CD8-positive, alpha-beta T cell (primary cell): ENCODE measurements at regions of chr5 and their contacts with region 1.

Region 1: GRCh38 chr5:87020099-87020934 is 247.4 kb upstream of the RASA1 start:
- DNase-seq: peak in 6 of 9 experiments; percentile 5 to 65 (median 28)
- ATAC-seq: peak; percentile 48
- H3K4me3 ChIP-seq: no peak overlapping the region
- H3K4me3 Mint-ChIP-seq: no peak overlapping the region
- H3K27ac ChIP-seq: peak overlapping the region in 1 of 2 experiments; percentile 17
- H3K27ac Mint-ChIP-seq: no peak overlapping the region
- H3K4me1 ChIP-seq: peaks cover 12% of the 10 kb centered on the region
- H3K4me1 Mint-ChIP-seq: peaks cover 30% of the 10 kb centered on the region
- H3K27me3 ChIP-seq: no peaks in the 10 kb centered on the region
- H3K27me3 Mint-ChIP-seq: no peaks in the 10 kb centered on the region
- CTCF ChIP-seq: no peak

Region 2: DNA sequence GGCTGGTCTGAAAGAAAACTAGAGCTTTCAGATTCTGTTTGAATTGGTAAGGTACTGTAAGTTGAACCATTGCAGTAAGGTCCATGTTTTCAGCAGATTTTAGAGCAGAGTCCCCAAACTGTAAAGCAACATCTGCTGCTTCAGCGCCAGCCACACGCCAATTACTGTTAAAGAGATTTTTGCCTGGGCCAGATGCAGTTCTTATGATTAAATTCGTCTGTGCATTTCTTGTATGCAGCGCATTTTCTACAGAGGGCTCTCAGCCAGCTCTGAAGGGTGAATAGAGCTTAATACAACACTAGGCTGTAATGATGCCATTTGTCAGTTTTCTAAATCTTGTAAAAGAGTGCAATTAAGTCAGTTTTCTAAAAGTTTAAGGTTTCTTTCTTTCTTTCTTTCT is 156.3 kb before region 1 on chr5:
- CTCF ChIA-PET with region 1: no interaction called
- POLR2A ChIA-PET with region 1: no interaction called
- intact Hi-C with region 1: no loop called
- DNase-seq: no peak
- ATAC-seq: no peak
- H3K4me3 ChIP-seq: no peak overlapping the region
- H3K4me3 Mint-ChIP-seq: no peak overlapping the region
- H3K27ac ChIP-seq: no peak overlapping the region
- H3K27ac Mint-ChIP-seq: no peak overlapping the region
- H3K4me1 ChIP-seq: no peaks in the 10 kb centered on the region
- H3K4me1 Mint-ChIP-seq: no peaks in the 10 kb centered on the region
- H3K27me3 ChIP-seq: no peaks in the 10 kb centered on the region
- H3K27me3 Mint-ChIP-seq: peaks cover 7% of the 10 kb centered on the region
- CTCF ChIP-seq: no peak

Region 3: DNA sequence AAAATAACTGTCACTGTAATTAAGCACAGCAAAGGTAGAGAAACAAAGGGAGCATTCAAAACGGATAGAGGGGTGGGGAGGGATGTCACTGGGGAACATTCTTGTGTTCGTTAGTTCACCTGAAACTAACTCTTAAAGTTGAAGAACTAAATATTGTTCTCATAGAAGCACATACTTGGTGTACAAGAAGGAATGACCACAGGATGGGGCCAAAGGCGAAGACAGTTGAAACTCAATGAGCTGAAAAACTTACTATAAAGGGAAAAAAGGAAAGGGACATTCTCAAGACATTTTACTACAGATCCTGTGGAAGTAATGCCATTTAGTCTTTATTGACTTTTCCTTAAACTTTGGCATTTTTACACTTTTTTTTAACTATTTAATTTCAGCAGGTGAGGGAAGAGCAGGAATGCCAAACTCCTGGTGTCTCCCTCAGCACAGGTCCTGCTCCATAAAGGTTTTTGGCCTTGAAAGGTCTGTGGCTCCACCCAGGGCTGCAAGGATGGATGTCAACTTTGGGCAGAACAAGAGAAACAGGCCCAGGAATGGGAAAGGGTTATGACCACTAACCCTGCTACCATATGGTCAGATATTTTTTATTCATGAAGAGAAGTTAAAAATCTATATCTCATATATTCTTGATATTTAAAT is 49.8 kb after region 1 on chr5:
- CTCF ChIA-PET with region 1: no interaction called
- POLR2A ChIA-PET with region 1: no interaction called
- intact Hi-C with region 1: loop called in 1 of 2 experiments (anchors 10 kb)
- DNase-seq: peak in 2 of 9 experiments; percentile 38 to 47
- ATAC-seq: no peak
- H3K4me3 ChIP-seq: no peak overlapping the region
- H3K4me3 Mint-ChIP-seq: no peak overlapping the region
- H3K27ac ChIP-seq: no peak overlapping the region
- H3K27ac Mint-ChIP-seq: no peak overlapping the region
- H3K4me1 ChIP-seq: peaks cover 12% of the 10 kb centered on the region
- H3K4me1 Mint-ChIP-seq: peaks cover 28% of the 10 kb centered on the region
- H3K27me3 ChIP-seq: no peaks in the 10 kb centered on the region
- H3K27me3 Mint-ChIP-seq: no peaks in the 10 kb centered on the region
- CTCF ChIP-seq: no peak

Region 4: DNA sequence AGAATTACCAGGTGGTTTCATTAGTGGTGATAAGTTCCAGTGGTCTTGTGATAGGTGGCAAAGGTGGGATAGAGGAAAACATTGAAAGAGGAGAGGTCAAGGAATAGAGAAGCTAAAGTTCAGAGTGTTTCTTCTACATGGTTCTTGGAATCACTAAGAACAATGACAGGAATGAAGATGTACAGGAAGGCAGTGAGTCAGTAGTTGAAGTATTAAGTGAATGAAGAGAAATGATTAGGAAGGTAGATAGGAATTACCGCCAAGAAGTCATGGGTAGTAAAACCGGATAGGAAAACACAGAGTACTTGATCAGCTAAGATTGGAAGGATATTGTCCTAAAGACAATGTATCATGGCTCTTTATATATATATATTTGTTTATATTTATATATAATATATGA is 209.5 kb after region 1 on chr5:
- CTCF ChIA-PET with region 1: no interaction called
- POLR2A ChIA-PET with region 1: no interaction called
- intact Hi-C with region 1: loop called in 1 of 2 experiments (anchors 10 kb)
- DNase-seq: no peak
- ATAC-seq: no peak
- H3K4me3 ChIP-seq: no peak overlapping the region
- H3K4me3 Mint-ChIP-seq: no peak overlapping the region
- H3K27ac ChIP-seq: no peak overlapping the region
- H3K27ac Mint-ChIP-seq: no peak overlapping the region
- H3K4me1 ChIP-seq: no peaks in the 10 kb centered on the region
- H3K4me1 Mint-ChIP-seq: peaks cover 4% of the 10 kb centered on the region
- H3K27me3 ChIP-seq: no peaks in the 10 kb centered on the region
- H3K27me3 Mint-ChIP-seq: no peaks in the 10 kb centered on the region
- CTCF ChIP-seq: no peak

Region 5: DNA sequence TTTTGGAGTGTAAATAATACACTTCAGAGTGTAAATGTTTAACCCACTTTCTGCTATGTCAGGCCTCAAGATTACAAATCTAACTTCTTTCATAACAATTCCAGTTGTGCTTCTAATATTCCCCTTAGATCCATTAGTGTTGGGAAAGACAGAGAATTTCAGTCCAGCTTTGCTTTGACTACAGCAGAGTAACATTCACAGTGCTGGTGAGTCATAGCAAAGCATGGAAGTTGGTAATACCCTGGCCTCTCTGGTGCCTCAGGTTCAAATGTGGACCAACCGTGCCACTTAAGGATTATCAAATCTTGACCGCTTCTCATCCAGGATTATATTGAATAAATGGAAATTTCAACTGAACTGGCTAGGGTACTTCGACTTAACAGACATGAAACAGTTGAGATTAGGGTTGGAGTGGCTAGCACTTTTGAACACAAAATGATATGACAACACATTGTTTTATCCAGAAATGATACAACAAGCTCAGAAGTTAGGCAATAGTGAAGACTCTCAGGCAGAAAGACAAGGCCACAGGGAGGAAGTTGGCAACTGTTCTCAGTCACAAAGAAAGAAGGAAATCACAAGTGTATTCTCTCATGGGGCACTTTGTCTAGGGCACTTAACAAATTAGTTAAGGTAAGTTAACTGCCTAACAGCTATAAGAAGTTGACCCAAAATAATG is 223.0 kb after region 1 on chr5:
- CTCF ChIA-PET with region 1: no interaction called
- POLR2A ChIA-PET with region 1: no interaction called
- intact Hi-C with region 1: no loop called
- DNase-seq: no peak
- ATAC-seq: no peak
- H3K4me3 ChIP-seq: no peak overlapping the region
- H3K4me3 Mint-ChIP-seq: no peak overlapping the region
- H3K27ac ChIP-seq: no peak overlapping the region
- H3K27ac Mint-ChIP-seq: no peak overlapping the region
- H3K4me1 ChIP-seq: no peaks in the 10 kb centered on the region
- H3K4me1 Mint-ChIP-seq: no peaks in the 10 kb centered on the region
- H3K27me3 ChIP-seq: no peaks in the 10 kb centered on the region
- H3K27me3 Mint-ChIP-seq: no peaks in the 10 kb centered on the region
- CTCF ChIP-seq: no peak